Activated B cell treated with CpG ODN at 0.5 μM for 24 hours (primary cell): ENCODE measurements at regions of chr12 and their contacts with region 1.

Region 1: GRCh38 chr12:101642115-101643067 is 47.6 kb downstream of the MYBPC1 start:
- DNase-seq: no peak
- ATAC-seq: peak; percentile 31
- H3K4me3 Mint-ChIP-seq: peak overlapping the region; percentile 81
- H3K27ac Mint-ChIP-seq: peak overlapping the region; percentile 16
- H3K4me1 Mint-ChIP-seq: peaks cover 17% of the 10 kb centered on the region
- H3K27me3 Mint-ChIP-seq: peaks cover 9% of the 10 kb centered on the region
- CTCF ChIP-seq: no peak

Region 2: GRCh38 chr12:101653503-101653902 is 11.1 kb after region 1 on chr12:
- CTCF ChIA-PET with region 1: no interaction called
- POLR2A ChIA-PET with region 1: interaction called, 3 read pairs
- intact Hi-C with region 1: loop called (anchors 2 kb)
- DNase-seq: no peak
- ATAC-seq: no peak
- H3K4me3 Mint-ChIP-seq: no peak overlapping the region
- H3K27ac Mint-ChIP-seq: no peak overlapping the region
- H3K4me1 Mint-ChIP-seq: peaks cover 24% of the 10 kb centered on the region
- H3K27me3 Mint-ChIP-seq: no peaks in the 10 kb centered on the region
- CTCF ChIP-seq: no peak

Region 3: DNA sequence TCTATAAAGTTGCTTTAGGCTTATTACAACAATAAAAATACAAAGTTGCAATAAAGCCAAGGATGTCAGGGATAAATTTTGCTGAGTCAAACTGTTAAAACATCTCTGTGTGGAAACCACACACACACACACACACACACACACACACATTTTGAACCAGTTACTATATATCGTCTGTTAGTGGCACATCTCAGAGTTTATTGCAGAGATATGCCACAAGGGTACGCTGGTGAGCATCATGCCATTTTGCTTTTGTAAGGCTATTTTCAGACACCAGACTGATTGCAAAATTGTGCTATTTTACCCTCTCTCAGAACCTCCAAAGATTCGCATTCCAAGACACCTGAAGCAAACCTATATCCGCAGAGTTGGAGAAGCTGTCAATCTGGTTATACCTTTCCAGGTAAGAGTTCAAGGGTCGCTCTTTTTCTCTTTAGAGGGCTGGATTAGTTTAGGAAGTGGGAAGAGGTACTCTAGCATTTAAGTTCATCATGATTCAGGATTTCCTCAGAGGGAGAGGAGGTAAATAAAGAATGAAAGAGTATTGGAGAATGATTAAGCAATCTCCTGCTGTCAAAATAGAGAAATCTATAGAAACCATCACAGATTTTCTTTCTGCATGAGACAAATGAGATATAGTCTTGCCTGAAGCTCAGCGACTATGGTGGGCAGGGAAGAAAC is 27.8 kb after region 1 on chr12:
- CTCF ChIA-PET with region 1: no interaction called
- POLR2A ChIA-PET with region 1: no interaction called
- intact Hi-C with region 1: no loop called
- DNase-seq: no peak
- ATAC-seq: peak; percentile 53
- H3K4me3 Mint-ChIP-seq: no peak overlapping the region
- H3K27ac Mint-ChIP-seq: no peak overlapping the region
- H3K4me1 Mint-ChIP-seq: peaks cover 21% of the 10 kb centered on the region
- H3K27me3 Mint-ChIP-seq: no peaks in the 10 kb centered on the region
- CTCF ChIP-seq: no peak

Region 4: GRCh38 chr12:101685092-101685491 is 42.7 kb after region 1 on chr12:
- CTCF ChIA-PET with region 1: no interaction called
- POLR2A ChIA-PET with region 1: no interaction called
- intact Hi-C with region 1: no loop called
- DNase-seq: no peak
- ATAC-seq: no peak
- H3K4me3 Mint-ChIP-seq: no peak overlapping the region
- H3K27ac Mint-ChIP-seq: no peak overlapping the region
- H3K4me1 Mint-ChIP-seq: peaks cover 2% of the 10 kb centered on the region
- H3K27me3 Mint-ChIP-seq: peaks cover 5% of the 10 kb centered on the region
- CTCF ChIP-seq: no peak